Tibial artery (tissue), 4 donors: ENCODE measurements at regions of chr9 and their contacts with region 1.

Region 1: GRCh38 chr9:18834740-18835361 is 198.2 kb downstream of the SAXO1 start:
- DNase-seq: no peak
- H3K4me3 ChIP-seq: no peak overlapping the region
- H3K27ac ChIP-seq: no peak overlapping the region
- H3K4me1 ChIP-seq: no peaks in the 10 kb centered on the region
- H3K27me3 ChIP-seq: no peaks in the 10 kb centered on the region
- CTCF ChIP-seq: no peak

Region 2: DNA sequence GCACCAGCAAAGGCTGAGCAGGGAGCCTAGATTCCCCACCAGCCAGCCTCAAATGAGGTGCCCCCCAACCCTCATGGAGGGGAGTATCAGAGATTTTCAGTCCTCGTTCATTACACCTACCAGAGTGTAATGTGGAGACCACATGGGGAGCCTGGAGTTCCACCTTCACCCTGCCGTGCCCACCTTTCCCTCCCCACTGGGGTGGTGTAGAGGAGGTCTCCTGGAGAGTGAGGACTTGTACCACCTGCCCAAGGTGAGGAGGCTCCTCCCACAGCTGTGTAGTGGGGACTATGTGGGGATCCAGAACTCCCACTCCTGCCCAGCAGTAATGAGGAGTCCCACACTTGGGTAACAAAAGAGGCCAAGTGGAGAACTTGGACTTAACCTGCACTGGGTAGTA is 23.7 kb before region 1 on chr9:
- intact Hi-C with region 1: loop called (anchors 2 kb)
- DNase-seq: no peak
- H3K4me3 ChIP-seq: no peak overlapping the region
- H3K27ac ChIP-seq: no peak overlapping the region
- H3K4me1 ChIP-seq: no peaks in the 10 kb centered on the region
- H3K27me3 ChIP-seq: no peaks in the 10 kb centered on the region
- CTCF ChIP-seq: no peak

Region 3: DNA sequence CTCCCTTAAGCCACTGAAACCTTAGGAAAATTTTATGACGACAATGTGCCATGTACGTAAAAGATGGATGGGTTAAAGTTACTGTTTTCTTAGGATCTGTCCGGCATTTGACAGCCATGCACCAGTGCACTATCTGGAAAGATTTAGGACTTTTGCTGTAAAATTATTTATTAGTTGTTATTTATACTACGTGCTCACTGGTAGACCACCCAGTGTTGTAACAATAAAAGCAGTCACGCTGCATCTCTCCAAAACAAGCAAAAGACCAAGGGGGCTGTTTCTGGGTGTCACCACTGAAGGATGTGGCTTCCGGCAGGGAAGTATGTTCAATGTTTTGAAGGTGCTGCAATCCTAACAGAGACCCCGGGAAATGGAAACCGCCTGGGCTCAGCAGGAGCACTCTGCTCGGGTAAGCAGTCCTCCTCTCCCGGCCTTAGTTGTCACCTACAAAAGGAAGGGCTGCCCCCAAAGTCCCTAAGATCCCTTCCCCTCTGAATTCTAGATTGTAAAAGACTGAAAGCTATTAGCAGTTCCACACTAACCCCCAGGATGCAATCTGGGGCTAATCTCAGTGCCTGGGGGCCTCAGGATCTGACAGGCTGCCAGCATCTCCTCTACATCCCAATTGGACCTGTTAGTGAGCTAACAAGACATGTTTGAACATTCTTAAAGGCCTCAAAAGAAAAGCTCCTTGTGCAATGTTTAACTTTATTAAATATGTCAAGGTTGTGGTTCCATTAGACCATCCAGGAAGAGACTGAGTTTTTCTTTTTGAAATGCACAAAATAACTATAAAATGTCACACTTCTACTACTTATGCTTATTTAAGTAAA is 159.6 kb after region 1 on chr9:
- intact Hi-C with region 1: no loop called
- DNase-seq: no peak
- H3K4me3 ChIP-seq: no peak overlapping the region
- H3K27ac ChIP-seq: no peak overlapping the region
- H3K4me1 ChIP-seq: no peaks in the 10 kb centered on the region
- H3K27me3 ChIP-seq: no peaks in the 10 kb centered on the region
- CTCF ChIP-seq: no peak